Panc1 (cell line): ENCODE measurements at regions of chr2 and their contacts with region 1.

Region 1: GRCh38 chr2:235734688-235735231 is 240.9 kb downstream of the AGAP1 start:
- DNase-seq: no peak
- ATAC-seq: no peak
- H3K4me3 ChIP-seq: no peak overlapping the region
- H3K27ac ChIP-seq: no peak overlapping the region
- H3K4me1 ChIP-seq: no peaks in the 10 kb centered on the region
- H3K27me3 ChIP-seq: no peaks in the 10 kb centered on the region
- CTCF ChIP-seq: no peak

Region 2: GRCh38 chr2:235715601-235716000 is 19.2 kb before region 1 on chr2:
- CTCF ChIA-PET with region 1: no interaction called
- POLR2A ChIA-PET with region 1: no interaction called
- in situ Hi-C with region 1: no loop called
- intact Hi-C with region 1: loop called (anchors 1 kb)
- DNase-seq: no peak
- ATAC-seq: no peak
- H3K4me3 ChIP-seq: no peak overlapping the region
- H3K27ac ChIP-seq: no peak overlapping the region
- H3K4me1 ChIP-seq: no peaks in the 10 kb centered on the region
- H3K27me3 ChIP-seq: no peaks in the 10 kb centered on the region
- CTCF ChIP-seq: no peak